BJ (cell line): ENCODE measurements at regions of chr20 and their contacts with region 1.

Region 1: GRCh38 chr20:13302647-13303450 is 81.8 kb downstream of the ISM1 start:
- DNase-seq: no peak
- H3K4me3 ChIP-seq: no peak overlapping the region
- H3K27me3 ChIP-seq: no peaks in the 10 kb centered on the region
- CTCF ChIP-seq: peak; percentile 75

Region 2: GRCh38 chr20:13216533-13216932 is 86.3 kb before region 1 on chr20:
- CTCF ChIA-PET with region 1: interaction called, 10 read pairs
- POLR2A ChIA-PET with region 1: no interaction called
- DNase-seq: no peak
- H3K4me3 ChIP-seq: no peak overlapping the region
- H3K27me3 ChIP-seq: peaks cover 31% of the 10 kb centered on the region
- CTCF ChIP-seq: no peak

Region 3: DNA sequence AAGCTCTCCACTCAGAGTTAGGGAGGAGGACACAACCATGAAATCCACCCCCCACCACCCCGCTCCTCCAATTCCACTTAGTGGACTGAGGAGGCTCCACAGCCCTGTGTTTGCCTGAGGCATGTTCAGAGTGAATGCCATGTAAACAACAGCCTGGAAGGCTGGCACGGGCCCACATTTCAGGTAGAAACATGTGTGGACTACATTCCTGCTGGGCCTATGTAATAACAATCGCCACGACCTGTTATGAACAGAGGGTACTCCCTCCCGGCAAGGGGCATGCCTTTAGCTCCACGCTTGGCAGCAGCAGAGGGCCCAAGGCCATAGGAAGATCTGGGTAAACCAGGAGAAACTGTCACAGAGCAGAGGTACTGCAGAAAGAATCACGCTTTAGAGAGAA is 16.2 kb before region 1 on chr20:
- CTCF ChIA-PET with region 1: interaction called, 16 read pairs
- POLR2A ChIA-PET with region 1: interaction called, 4 read pairs
- DNase-seq: no peak
- H3K4me3 ChIP-seq: no peak overlapping the region
- H3K27me3 ChIP-seq: no peaks in the 10 kb centered on the region
- CTCF ChIP-seq: no peak

Region 4: GRCh38 chr20:13510837-13511488 is 208.1 kb after region 1 on chr20:
- CTCF ChIA-PET with region 1: no interaction called
- POLR2A ChIA-PET with region 1: no interaction called
- DNase-seq: no peak
- H3K4me3 ChIP-seq: no peak overlapping the region
- H3K27me3 ChIP-seq: no peaks in the 10 kb centered on the region
- CTCF ChIP-seq: no peak

Region 5: DNA sequence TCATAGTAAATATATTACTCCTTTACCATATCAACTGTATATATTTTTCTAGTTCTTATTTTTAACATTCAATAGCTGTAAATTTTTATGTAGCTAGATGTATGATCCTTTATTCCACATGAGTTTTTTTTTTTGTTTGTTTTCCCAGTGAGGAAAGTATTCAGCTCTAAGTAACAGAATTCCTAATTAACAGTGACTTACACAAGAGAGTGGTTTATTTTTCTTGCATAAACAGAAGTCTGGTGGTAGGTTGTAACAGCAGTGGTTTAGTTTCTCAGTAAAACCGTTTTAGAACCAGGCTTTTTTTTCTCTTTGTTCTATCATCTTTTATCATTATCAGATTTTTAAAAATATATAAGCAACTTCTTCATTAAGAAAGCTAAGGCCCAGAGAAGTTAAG is 1151.4 kb after region 1 on chr20:
- CTCF ChIA-PET with region 1: no interaction called
- POLR2A ChIA-PET with region 1: no interaction called
- DNase-seq: no peak
- H3K4me3 ChIP-seq: no peak overlapping the region
- H3K27me3 ChIP-seq: no peaks in the 10 kb centered on the region
- CTCF ChIP-seq: no peak